ENCODE measurements at regions of chr6 and their contacts with region 1.

Region 1: GRCh38 chr6:142474531-142475289 is 172.9 kb downstream of the ADGRG6 start:
- DNase-seq: peak; percentile 58 to 71
- H3K4me3 ChIP-seq: peak overlapping the region; percentile 38; the same call in 1 of the 2 replicates
- H3K27ac ChIP-seq: no peak overlapping the region
- H3K4me1 ChIP-seq: no peaks in the 10 kb centered on the region
- H3K27me3 ChIP-seq: no peaks in the 10 kb centered on the region
- CTCF ChIP-seq: peak; percentile 91

Region 2: DNA sequence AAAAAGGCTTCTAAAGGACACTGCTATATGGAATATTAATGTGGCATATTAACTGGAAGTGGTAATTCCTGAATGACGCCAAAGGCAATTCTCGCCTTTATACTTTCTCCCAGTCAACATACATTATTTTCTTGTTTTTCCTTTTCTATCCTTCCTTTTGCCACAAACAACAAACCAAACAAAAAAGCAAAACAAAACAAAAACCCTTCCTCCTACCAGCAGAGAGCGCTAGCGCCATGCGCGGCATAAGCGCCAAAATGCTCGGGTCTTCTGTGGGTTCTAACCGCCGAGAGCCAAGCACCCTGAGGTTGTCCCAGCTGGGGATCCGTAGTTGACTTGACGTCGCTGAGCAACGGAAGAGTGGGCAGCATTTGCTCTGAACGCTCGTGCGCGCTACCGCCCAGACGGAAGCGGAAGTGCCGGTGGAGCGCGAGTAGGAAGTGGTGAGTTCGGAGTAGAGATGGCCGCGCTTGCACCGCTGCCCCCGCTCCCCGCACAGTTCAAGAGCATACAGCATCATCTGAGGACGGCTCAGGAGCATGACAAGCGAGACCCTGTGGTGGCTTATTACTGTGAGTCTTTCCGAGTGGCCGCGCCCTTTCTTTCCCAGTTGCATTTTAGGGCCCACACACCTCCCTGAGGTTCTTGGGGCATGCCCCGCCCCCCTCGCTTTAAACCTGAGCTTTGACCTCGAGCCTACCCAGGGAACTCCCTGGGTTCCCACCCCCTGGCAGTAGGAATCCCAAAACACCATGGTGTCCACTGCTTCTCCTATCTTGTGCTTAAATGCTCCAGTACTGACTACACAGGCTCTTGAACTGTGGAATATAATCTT is 327.7 kb before region 1 on chr6 and contains the starts of genes NMBR and VTA1:
- CTCF ChIA-PET with region 1: interaction called, 3 read pairs
- POLR2A ChIA-PET with region 1: no interaction called
- intact Hi-C with region 1: loop called (anchors 2 kb)
- DNase-seq: peak; percentile 95
- H3K4me3 ChIP-seq: peak within 1 kb of the TSS; percentile 92
- H3K27ac ChIP-seq: peak within 1 kb of the TSS; percentile 25; the same call in 1 of the 2 replicates
- H3K4me1 ChIP-seq: peaks cover 19% of the 10 kb centered on the region; the same call in 1 of the 2 replicates
- H3K27me3 ChIP-seq: no peaks in the 10 kb centered on the region
- CTCF ChIP-seq: peak; percentile 84
- total RNA-seq, gene NMBR: 0.35 TPM in 1 of 2 replicates, not detected in the other
- total RNA-seq, gene VTA1: 29.5 and 52.0 TPM in 2 replicates

Region 3: GRCh38 chr6:142566628-142567396 is 92.1 kb after region 1 on chr6:
- CTCF ChIA-PET with region 1: interaction called, 3 read pairs
- POLR2A ChIA-PET with region 1: no interaction called
- intact Hi-C with region 1: loop called (anchors 1 kb)
- DNase-seq: peak; percentile 44 to 56
- H3K4me3 ChIP-seq: no peak overlapping the region
- H3K27ac ChIP-seq: no peak overlapping the region
- H3K4me1 ChIP-seq: peaks cover 20% of the 10 kb centered on the region
- H3K27me3 ChIP-seq: no peaks in the 10 kb centered on the region
- CTCF ChIP-seq: peak; percentile 90

Region 4: DNA sequence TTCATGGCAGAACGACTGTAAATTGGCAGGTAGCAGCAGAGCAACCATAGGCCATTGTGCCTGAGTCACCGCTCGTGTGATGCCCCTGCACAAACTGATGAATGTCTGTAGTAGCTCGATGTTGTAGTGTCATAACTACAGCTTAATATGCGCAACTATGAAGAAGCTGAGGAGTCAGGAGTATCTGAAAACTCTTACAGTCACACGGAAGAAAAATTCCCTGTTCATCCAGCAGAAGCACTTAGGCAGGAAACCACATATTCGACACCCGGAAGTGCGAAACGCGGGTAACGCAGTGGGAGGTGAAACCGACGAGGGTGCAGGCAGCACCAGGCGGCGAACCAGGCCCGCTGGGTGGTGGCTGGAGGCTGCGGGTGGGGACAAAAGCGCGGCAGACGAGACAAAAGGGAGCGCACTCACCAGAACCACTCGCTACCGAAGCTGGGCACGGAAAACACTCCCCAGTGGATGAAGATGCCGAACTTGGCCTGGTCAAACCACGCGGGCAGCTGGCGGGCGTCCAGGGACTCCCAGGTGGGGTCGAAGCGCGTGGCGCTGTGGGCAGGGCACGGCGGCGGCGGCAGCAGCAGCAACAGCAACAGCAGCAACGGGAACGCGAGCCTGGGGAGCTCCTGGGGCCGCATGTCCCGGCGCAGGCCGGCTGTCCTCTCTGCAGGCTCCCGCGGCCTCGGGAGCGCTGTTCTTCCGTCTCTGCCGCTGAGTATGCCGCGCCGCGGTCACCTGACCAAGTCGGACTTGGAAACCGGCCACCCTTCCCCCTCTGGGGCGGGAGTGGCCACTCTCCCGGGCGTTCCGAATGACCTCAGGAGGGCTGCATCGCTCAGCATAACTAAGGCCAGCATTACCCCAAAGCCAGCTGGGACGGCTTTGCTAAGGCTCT is 1036.5 kb after region 1 on chr6 and contains the start of gene FUCA2:
- CTCF ChIA-PET with region 1: no interaction called
- POLR2A ChIA-PET with region 1: no interaction called
- intact Hi-C with region 1: loop called (anchors 10 kb)
- DNase-seq: peak; percentile 65 to 84
- H3K4me3 ChIP-seq: peak within 1 kb of the TSS; percentile 81
- H3K27ac ChIP-seq: peak within 1 kb of the TSS; percentile 71
- H3K4me1 ChIP-seq: peaks cover 21% of the 10 kb centered on the region
- H3K27me3 ChIP-seq: no peaks in the 10 kb centered on the region
- CTCF ChIP-seq: no peak
- total RNA-seq, gene FUCA2: 65.0 and 74.8 TPM in 2 replicates

Region 5: GRCh38 chr6:144013486-144013909 is 1538.8 kb after region 1 on chr6:
- CTCF ChIA-PET with region 1: no interaction called
- POLR2A ChIA-PET with region 1: no interaction called
- intact Hi-C with region 1: loop called (anchors 1 kb)
- DNase-seq: peak; percentile 62 to 63
- H3K4me3 ChIP-seq: no peak overlapping the region
- H3K27ac ChIP-seq: no peak overlapping the region
- H3K4me1 ChIP-seq: no peaks in the 10 kb centered on the region
- H3K27me3 ChIP-seq: peaks cover 4% of the 10 kb centered on the region; the same call in 1 of the 2 replicates
- CTCF ChIP-seq: peak; percentile 88